Activated naive CD4-positive, alpha-beta T cell treated with anti-CD3 and anti-CD28 coated beads for 36 hours (primary cell): ENCODE measurements at regions of chr12 and their contacts with region 1.

Region 1: DNA sequence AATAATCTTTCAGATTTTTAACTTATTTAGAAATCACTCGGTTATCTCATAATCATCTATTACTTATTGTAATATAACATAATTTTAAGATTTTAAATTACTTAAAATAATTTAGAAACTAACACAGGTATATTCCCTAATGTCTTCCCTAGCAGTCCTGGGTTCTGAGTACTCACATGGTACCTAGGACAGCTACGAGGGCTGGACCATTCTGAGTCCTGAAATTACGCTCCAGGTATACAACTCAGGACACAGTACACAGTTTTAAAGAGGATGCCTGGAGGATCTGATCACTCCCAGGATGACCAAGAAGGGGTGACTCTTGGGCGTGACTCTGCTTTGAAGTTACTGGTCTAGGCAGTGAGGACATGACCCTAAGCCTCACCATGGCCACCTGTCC is 9.1 kb upstream of the RASSF8 start:
- DNase-seq: no peak
- H3K4me3 Mint-ChIP-seq: no peak overlapping the region
- H3K27ac Mint-ChIP-seq: no peak overlapping the region
- H3K4me1 Mint-ChIP-seq: no peaks in the 10 kb centered on the region
- H3K27me3 Mint-ChIP-seq: peaks cover 2% of the 10 kb centered on the region

Region 2: GRCh38 chr12:24991209-24992049 is 957.9 kb before region 1 on chr12:
- CTCF ChIA-PET with region 1: no interaction called
- intact Hi-C with region 1: no loop called
- DNase-seq: no peak
- H3K4me3 Mint-ChIP-seq: no peak overlapping the region
- H3K27ac Mint-ChIP-seq: no peak overlapping the region
- H3K4me1 Mint-ChIP-seq: peaks cover 9% of the 10 kb centered on the region
- H3K27me3 Mint-ChIP-seq: peaks cover 2% of the 10 kb centered on the region

Region 3: DNA sequence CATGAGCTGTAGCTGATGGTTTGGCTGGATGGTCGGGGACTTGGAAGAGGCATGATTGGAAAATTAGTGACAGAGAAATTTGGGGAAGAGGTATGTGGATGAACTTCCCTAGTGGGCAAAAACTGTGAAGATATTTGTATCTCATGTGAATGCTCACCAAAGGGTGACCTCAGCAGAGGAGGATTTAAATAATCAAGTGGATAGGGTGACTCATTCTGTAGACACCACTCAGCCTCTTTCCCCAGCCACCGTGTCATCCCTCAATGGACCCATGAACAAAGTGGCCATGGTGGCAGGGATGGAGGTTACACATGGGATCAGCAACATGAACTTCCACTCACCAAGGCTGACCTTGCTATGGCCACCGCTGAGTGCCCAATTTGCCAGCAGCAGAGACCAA is 637.8 kb before region 1 on chr12:
- CTCF ChIA-PET with region 1: no interaction called
- intact Hi-C with region 1: loop called (anchors 5 kb)
- DNase-seq: no peak
- H3K4me3 Mint-ChIP-seq: no peak overlapping the region
- H3K27ac Mint-ChIP-seq: no peak overlapping the region
- H3K4me1 Mint-ChIP-seq: no peaks in the 10 kb centered on the region
- H3K27me3 Mint-ChIP-seq: no peaks in the 10 kb centered on the region

Region 4: DNA sequence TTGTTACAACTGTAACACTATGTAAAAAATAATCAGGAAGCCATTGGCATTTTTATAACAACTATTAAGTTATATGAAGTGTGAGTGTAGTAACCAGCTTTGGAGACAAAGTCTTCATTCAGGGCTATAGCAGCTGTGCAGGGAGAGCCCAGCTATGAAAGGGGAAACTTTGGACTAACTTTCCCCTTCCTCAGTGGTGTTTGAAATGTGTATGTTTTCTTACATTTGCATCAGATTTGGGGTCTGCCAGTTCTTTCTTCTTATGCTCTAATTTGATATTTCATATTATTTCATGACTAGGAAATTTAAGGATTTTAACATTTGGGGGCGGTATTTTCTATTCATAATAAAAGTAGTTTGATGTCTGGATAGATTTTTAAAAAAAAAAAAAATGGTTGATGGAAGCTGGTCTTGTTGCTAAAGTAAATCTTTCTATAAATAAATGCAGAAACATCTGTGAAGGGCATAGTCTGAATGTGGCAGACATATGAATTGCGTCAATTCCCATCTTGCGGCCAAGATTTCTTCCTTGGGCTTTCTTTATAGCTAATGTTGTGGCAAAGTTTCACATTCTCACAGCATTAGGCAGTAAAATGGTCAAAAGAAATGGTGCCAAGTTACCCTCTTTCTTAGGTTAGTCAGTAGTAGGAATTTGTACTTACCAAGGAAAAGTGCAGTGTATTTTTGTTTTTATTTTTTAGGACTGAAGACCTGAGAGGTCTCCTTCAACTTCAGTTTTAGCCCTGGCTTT is 44.7 kb after region 1 on chr12:
- CTCF ChIA-PET with region 1: no interaction called
- intact Hi-C with region 1: no loop called
- DNase-seq: no peak
- H3K4me3 Mint-ChIP-seq: no peak overlapping the region
- H3K27ac Mint-ChIP-seq: no peak overlapping the region
- H3K4me1 Mint-ChIP-seq: no peaks in the 10 kb centered on the region
- H3K27me3 Mint-ChIP-seq: peaks cover 8% of the 10 kb centered on the region